ENCODE measurements at regions of chr5 and their contacts with region 1.

Region 1: DNA sequence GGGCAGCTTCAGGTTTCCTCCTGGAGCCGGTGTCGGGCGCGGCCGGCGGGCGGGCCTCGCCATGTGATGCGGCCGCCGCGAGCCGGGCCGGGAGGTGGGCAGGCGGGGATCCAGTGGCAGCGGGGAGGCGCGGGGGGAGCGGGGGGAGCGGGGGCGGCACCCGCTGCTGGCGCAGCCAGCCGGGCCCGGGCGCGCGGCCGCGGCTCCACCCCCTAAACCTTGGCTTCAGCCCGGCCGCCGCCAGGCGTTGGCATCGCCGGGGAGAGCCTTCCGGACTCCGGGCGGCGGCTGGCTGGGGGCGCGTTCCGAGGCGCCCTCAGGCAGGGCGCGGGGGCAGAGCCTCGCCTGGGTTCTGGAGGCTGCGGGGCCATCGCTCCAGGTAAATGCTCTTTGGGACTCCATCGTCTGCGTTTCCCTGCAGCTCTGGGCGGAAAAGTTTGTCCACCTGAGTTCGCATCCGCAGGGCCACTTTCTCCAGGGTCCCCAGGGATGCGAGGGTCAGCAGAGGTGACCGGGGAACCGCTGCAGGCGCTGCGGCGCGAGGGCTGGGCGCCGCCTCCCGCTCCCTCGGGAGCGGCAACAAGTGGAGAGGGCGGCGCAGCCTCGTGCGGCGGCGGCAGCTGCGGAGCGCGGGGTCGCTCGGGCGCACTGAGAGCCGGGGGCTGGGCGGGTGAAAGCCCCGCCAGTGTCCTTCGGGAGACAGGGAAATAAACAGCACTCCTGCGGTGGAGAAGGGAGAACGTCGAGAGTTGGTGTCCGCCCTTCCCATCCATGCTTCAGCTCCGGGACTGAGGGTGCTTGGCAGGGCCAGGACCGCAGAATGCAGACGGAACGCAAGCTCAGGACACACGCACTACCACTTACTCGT is at the start of gene ARHGEF28:
- DNase-seq: peak; percentile 59
- ATAC-seq: peak; percentile 80
- H3K4me3 Mint-ChIP-seq: peak within 1 kb of the TSS; percentile 67
- H3K27ac Mint-ChIP-seq: no peak within 1 kb of the TSS
- H3K4me1 Mint-ChIP-seq: peaks cover 26% of the 10 kb centered on the region
- H3K27me3 Mint-ChIP-seq: peaks cover 36% of the 10 kb centered on the region
- CTCF ChIP-seq: no peak
- total RNA-seq, gene ARHGEF28: 0.57 to 0.96 TPM (median 0.71 TPM) in 3 replicates

Region 2: DNA sequence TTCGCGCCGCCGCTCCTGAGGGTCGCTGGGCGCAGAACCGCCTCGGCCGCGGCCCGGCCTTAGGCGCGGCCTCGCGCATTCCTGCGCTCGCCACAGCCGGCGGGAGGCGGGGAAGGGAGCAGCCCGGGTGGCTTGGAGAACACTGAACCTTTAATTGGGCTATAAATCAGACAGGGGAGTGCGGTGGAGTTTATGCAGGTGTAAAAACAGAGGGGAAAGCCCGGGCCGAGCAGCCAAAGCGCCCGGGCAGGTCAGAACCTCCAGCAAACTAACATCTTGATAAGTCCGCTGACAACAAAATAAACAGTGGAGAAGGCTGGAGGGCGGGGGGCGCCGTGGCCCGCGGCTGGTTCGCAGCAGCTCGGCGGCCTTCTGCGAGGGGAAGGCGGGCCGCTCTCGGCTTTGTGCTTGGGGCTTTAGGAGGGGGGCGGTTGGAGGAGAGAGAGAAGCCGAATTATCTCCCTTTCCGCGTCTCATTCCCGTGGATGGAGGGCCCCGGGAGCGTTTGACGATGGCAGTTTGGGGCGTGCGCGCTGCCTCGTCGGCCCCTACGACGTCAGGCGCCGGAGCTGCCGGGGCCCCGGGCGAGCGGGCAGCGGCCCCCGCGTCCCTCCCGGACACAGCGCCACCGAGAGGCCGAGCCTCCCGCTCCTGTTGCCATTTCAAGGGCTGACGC is 188.9 kb before region 1 on chr5:
- CTCF ChIA-PET with region 1: no interaction called
- POLR2A ChIA-PET with region 1: no interaction called
- DNase-seq: peak; percentile 82
- ATAC-seq: peak; percentile 70
- H3K4me3 Mint-ChIP-seq: peak overlapping the region; percentile 70
- H3K27ac Mint-ChIP-seq: no peak overlapping the region
- H3K4me1 Mint-ChIP-seq: peaks cover 39% of the 10 kb centered on the region
- H3K27me3 Mint-ChIP-seq: peaks cover 98% of the 10 kb centered on the region
- CTCF ChIP-seq: no peak

Region 3: GRCh38 chr5:73596705-73597328 is 29.4 kb before region 1 on chr5:
- CTCF ChIA-PET with region 1: interaction called, 10 read pairs
- POLR2A ChIA-PET with region 1: no interaction called
- DNase-seq: peak; percentile 29
- ATAC-seq: peak; percentile 80
- H3K4me3 Mint-ChIP-seq: no peak overlapping the region
- H3K27ac Mint-ChIP-seq: no peak overlapping the region
- H3K4me1 Mint-ChIP-seq: no peaks in the 10 kb centered on the region
- H3K27me3 Mint-ChIP-seq: no peaks in the 10 kb centered on the region
- CTCF ChIP-seq: peak; percentile 52

Region 4: DNA sequence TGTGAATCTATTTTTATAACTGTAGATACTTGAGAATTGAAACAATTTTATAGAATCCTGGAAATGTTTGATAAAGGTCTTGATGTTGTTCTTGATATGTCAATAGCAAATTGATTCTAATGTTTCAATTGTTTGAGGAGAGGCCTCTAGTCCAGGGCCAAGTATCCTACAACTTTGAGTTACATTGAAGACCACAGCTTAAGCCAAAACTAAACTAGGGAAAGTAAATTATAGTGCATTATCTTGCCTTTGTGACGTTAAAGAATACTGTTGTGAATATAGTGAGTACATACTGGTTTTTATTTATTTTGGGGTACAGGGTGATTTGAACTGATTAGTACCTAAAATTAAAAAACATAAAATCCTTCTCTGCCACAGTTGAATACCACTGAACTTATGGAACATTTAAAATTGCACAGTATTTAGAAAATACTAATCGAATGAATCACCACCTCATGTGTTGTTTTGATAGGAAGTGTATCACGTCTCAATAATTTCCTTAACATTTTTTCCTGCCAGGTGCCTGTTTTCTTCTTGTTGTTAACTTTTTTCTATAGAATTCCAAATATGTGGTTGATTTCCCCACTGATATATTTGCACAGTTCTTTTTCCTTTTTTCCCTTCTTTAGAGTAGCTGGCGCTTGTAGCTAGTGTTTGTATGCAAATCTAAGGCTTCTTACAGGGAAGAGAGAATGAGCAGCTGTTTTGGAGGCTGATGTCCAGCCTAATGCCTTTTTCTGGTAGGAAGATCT is 12.3 kb after region 1 on chr5:
- CTCF ChIA-PET with region 1: no interaction called
- POLR2A ChIA-PET with region 1: no interaction called
- DNase-seq: no peak
- ATAC-seq: no peak
- H3K4me3 Mint-ChIP-seq: no peak overlapping the region
- H3K27ac Mint-ChIP-seq: no peak overlapping the region
- H3K4me1 Mint-ChIP-seq: peaks cover 23% of the 10 kb centered on the region
- H3K27me3 Mint-ChIP-seq: peaks cover 21% of the 10 kb centered on the region
- CTCF ChIP-seq: no peak

Measured in WTC11 (cell line).